Activated naive CD4-positive, alpha-beta T cell treated with anti-CD3 and anti-CD28 coated beads for 36 hours (primary cell): ENCODE measurements at regions of chr11 and their contacts with region 1.

Region 1: DNA sequence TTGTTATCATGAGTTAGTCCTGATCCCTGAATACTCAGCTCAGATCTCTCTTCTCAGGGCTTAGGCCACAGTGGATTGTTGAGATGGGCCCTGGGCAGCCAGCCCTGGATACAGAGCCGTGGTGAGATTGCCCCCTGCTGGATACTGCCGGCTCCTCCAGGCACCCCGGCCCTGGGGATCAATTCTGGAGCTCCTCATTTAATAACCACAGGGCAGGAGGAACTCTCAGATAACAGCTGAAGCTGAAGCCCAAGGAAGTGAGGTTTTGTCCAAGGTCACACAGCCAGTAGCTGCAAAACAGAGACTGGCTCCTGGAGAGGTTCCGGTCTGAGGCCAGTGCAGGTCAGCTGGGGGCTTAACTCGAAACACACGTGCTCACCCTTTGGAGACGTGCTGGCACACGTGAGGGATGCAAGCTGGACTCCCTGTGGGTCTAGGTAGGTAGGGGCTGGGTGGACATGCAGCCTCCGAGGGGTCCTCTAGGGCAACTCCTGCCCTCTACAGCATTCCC is 16.0 kb downstream of the USH1C start:
- DNase-seq: peak; percentile 68
- H3K4me3 Mint-ChIP-seq: no peak overlapping the region
- H3K27ac Mint-ChIP-seq: no peak overlapping the region
- H3K4me1 Mint-ChIP-seq: no peaks in the 10 kb centered on the region
- H3K27me3 Mint-ChIP-seq: no peaks in the 10 kb centered on the region

Region 2: DNA sequence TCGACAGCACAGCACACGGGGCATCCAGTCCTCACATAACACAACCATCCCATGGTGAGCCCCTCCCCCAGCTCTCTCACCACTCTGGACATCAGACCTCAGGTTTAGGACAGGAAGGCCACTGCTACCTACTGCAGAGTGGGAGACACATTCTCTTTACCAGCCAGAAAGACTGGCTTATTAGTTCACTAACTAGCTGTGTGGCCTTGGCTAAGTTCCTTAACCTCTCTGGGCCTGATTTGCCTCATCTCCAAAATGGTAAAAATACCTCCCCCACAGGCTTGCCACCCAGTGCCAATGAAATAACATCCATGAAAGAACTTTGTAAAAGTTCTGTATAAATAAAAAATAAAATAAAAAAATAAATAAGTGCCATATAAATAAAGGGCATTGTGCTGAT is 16.1 kb before region 1 on chr11:
- CTCF ChIA-PET with region 1: interaction called, 34 read pairs
- intact Hi-C with region 1: no loop called
- DNase-seq: no peak
- H3K4me3 Mint-ChIP-seq: no peak overlapping the region
- H3K27ac Mint-ChIP-seq: no peak overlapping the region
- H3K4me1 Mint-ChIP-seq: no peaks in the 10 kb centered on the region
- H3K27me3 Mint-ChIP-seq: no peaks in the 10 kb centered on the region

Region 3: DNA sequence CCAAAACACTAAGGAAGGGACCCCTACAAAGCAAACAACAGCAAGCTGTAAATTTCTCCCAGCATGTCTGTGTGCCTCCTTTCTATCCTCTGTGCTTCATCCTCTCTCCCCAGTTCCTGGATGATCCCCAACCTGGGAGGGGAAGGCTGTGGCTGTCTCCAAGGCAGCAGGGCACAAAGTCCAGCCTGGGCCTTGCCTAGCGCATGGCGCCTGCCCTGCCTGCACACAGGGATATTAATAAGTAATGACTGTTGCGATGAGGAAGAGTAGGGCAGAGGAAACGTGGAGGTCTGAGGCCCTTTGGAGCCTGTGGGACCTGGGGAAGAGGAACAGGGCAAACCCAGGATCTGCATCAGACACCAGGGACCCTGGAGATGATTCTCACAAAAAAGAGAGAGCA is 14.0 kb after region 1 on chr11:
- CTCF ChIA-PET with region 1: interaction called, 19 read pairs
- intact Hi-C with region 1: no loop called
- DNase-seq: no peak
- H3K4me3 Mint-ChIP-seq: no peak overlapping the region
- H3K27ac Mint-ChIP-seq: no peak overlapping the region
- H3K4me1 Mint-ChIP-seq: peaks cover 4% of the 10 kb centered on the region
- H3K27me3 Mint-ChIP-seq: peaks cover 24% of the 10 kb centered on the region